WTC11 (cell line): ENCODE measurements at regions of chr17 and their contacts with region 1.

Region 1: GRCh38 chr17:16589097-16589969 is 20.3 kb upstream of the ZNF287 start:
- DNase-seq: peak; percentile 95
- ATAC-seq: peak; percentile 93
- H3K4me3 Mint-ChIP-seq: peak overlapping the region; percentile 69
- H3K27ac Mint-ChIP-seq: no peak overlapping the region
- H3K4me1 Mint-ChIP-seq: peaks cover 5% of the 10 kb centered on the region
- H3K27me3 Mint-ChIP-seq: peaks cover 53% of the 10 kb centered on the region
- CTCF ChIP-seq: peak; percentile 92

Region 2: GRCh38 chr17:16537130-16537458 is 52.2 kb before region 1 on chr17:
- CTCF ChIA-PET with region 1: interaction called, 32 read pairs
- POLR2A ChIA-PET with region 1: interaction called, 4 read pairs
- DNase-seq: no peak
- ATAC-seq: no peak
- H3K4me3 Mint-ChIP-seq: peak overlapping the region; percentile 98; the same call in 1 of the 2 replicates
- H3K27ac Mint-ChIP-seq: no peak overlapping the region
- H3K4me1 Mint-ChIP-seq: peaks cover 9% of the 10 kb centered on the region; the same call in 1 of the 2 replicates
- H3K27me3 Mint-ChIP-seq: no peaks in the 10 kb centered on the region
- CTCF ChIP-seq: no peak

Region 3: DNA sequence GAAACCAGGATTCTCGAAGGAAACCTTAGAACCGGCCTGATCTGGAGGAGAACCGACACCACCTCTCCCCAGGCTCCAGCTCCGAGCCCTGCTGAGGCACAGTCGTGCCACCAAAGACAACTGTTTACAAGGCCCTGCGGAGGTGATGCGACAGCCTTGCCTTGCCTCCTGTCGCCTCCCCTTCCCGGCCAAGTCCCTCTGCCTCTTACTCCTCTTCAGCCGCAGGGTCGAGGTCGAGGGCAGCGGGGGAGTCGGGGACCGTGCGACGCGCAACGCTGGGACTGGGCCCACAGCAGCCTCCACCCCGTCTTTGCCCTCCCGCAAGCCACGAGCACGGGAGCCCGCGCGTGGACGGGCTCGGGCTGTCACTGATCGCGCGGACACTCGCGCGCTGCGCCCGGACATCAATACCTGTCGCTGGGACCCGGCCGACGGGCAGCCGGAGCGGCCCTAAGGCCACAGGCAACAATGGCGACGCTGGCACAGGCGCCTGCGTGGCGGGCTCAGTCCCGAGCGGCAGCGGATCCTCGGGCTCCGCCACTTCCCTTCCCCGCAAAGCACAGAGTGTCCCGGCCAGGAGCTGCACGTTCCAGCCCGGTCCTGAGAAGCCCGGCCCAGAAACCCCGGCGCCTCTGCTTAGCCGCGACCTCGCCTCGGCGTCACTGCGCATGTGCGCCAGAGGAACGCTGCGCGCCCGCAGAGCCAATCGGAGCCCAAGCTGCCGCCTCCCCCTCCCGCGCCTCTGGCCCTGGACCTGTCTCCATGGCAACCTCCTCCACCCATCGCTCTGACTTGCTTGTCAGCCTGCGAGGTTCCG is 20.6 kb before region 1 on chr17 and contains the start of gene ZNF287:
- CTCF ChIA-PET with region 1: interaction called, 16 read pairs
- POLR2A ChIA-PET with region 1: no interaction called
- DNase-seq: peak; percentile 92
- ATAC-seq: peak; percentile 95
- H3K4me3 Mint-ChIP-seq: peak within 1 kb of the TSS; percentile 66
- H3K27ac Mint-ChIP-seq: no peak within 1 kb of the TSS
- H3K4me1 Mint-ChIP-seq: peaks cover 7% of the 10 kb centered on the region
- H3K27me3 Mint-ChIP-seq: peaks cover 69% of the 10 kb centered on the region
- CTCF ChIP-seq: no peak
- total RNA-seq, gene ZNF287: 5.4 to 8.9 TPM (median 8.1 TPM) in 3 replicates